H1 (cell line): ENCODE measurements at regions of chr12 and their contacts with region 1.

Region 1: DNA sequence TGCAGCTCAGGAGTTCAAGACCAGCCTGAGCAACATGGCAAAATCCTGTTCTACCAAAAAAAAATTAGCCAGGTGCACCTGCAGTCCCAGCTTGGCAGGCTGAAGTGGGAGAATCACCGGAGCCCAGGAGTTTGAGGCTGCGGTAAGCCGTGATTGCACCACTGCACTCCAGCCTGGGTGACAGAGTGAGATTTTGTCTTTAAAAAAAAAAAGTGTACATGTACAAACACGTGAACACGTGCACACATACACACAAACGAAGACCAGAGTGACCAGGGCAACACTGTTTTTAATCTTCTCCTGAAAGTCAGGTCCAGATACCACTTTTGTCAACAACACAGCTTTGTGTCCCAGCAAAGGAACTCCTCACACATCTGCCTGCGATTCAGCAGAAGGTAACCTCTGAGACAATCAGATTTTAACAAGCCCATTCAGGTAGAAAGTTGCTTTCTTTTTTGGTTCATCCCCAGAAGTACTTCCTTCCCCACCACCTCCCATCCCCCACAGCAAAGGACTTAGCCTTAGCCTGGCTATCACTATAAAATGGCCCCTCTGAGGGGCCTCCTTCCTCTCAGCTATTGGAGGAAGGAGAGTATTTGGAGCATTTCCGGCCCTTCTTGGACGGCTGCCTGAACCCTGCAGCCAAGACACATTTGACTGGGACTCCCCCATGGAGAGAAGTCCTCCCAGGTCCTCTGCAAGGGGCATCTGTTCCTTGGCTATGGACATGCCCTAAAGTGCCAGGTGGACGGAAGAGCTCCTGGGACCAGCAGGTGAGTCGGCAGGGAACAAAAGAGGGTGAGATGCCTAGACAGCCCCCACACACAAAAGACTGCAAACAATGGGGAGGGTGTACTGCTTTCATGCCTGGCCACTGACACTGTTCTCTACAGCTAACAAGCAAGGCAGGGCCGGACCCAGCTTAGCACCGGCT is 9.8 kb downstream of the CTDSP2 start:
- DNase-seq: no peak
- H3K4me3 ChIP-seq: peak overlapping the region in 3 of 4 experiments; percentile 0 to 31 (median 14); a peak in 3 of 8 replicates
- H3K27ac ChIP-seq: peak overlapping the region; percentile 55; the same call in 1 of the 2 replicates
- H3K4me1 ChIP-seq: peaks cover 37 to 69% (median 45%) of the 10 kb centered on the region in 4 experiments
- H3K27me3 ChIP-seq: no peaks in the 10 kb centered on the region
- CTCF ChIP-seq: no peak
- EP300 ChIP-seq: peak in 1 of 2 experiments; percentile 30; a peak in 1 of 3 replicates
- POLR2A ChIP-seq: no peak; a peak in 1 of 3 replicates
- RAD21 ChIP-seq: no peak

Region 2: DNA sequence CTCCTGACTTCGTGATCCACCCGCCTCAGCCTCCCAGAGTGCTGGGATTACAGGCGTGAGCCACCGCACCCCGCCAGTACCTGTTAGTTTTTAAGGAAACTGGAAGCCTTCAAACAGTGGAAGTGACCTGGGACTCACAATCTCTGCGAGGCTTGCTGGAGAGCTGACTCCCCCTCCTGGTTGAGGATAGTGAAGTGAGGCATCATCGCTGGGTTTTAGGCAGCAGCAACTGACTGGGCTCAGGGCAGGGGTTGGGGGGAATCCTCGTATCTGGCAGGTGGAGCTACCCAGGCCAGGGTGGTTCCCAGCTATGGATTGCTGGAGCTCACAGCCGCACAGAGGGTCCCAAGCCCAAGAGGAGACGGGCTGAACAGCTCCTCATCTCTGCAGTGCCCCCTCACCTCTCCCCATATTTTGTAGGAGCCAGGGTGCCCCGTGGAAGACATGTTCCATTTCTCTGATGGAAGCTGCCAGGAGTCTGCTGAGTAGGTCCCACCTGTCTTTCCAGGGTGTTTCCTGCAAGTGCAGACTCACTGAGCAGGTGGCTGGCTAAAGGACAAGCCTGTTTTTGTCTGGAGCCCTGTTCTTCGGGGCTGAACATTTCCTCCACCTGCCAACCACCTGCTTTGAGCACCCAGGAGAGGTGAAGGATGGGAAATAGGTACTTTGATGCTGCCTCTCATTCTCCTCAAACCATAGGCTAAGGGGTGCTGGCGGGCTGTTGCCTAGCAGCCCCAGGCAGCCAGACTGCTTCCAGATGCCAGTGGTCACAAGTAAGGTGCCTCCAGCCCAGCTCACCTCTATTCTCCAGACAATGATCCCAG is 21.3 kb before region 1 on chr12:
- CTCF ChIA-PET with region 1: interaction called, 8 read pairs
- POLR2A ChIA-PET with region 1: interaction called, 12 read pairs
- DNase-seq: peak; percentile 50 to 62
- H3K4me3 ChIP-seq: no peak overlapping the region
- H3K27ac ChIP-seq: no peak overlapping the region
- H3K4me1 ChIP-seq: no peaks in the 10 kb centered on the region
- H3K27me3 ChIP-seq: no peaks in the 10 kb centered on the region
- CTCF ChIP-seq: peak; percentile 63 to 70 (median 67)
- EP300 ChIP-seq: no peak
- POLR2A ChIP-seq: no peak
- RAD21 ChIP-seq: peak; percentile 57 to 70

Region 3: DNA sequence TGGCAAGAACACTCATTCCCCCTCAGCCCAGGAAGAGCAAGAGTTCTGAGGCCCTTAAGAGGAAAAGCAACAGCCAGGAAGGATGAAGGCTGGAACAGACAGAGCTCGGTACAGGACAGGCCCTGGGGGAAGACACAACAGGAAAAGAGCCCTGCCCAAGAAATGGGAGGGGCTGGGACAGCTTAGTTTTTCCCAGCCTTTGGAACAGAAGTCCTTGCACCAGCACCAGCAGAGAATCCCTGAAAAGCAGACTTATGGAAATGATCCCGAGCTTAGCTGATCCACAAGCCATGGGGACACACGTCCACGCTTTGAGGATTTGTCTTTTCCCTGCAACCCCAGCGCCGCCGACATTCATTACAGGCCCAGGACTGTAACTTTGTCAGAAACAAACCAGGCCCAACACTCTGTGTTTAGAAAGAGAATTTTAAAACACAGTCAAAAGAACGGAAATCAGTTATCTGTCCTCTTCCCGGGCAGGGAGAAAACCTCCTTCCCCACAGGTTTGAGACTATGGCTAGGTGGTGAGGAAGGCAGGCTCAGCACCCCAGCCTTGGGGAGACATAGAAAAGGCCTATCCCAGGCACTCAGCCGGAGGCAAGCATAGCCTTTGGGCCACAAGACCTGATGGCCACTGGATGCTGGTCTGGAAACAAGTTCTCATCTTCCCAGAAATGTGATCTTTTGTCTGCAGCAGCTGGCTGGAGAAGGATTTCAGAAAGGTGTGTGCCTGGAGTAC is 14.1 kb before region 1 on chr12:
- CTCF ChIA-PET with region 1: interaction called, 8 read pairs
- POLR2A ChIA-PET with region 1: interaction called, 12 read pairs
- DNase-seq: no peak
- H3K4me3 ChIP-seq: no peak overlapping the region
- H3K27ac ChIP-seq: no peak overlapping the region
- H3K4me1 ChIP-seq: no peaks in the 10 kb centered on the region
- H3K27me3 ChIP-seq: no peaks in the 10 kb centered on the region
- CTCF ChIP-seq: no peak
- EP300 ChIP-seq: no peak
- POLR2A ChIP-seq: no peak
- RAD21 ChIP-seq: no peak

Region 4: GRCh38 chr12:57852620-57853500 is 16.2 kb after region 1 on chr12:
- CTCF ChIA-PET with region 1: interaction called, 44 read pairs
- POLR2A ChIA-PET with region 1: interaction called, 722 read pairs
- DNase-seq: peak; percentile 80 to 85
- H3K4me3 ChIP-seq: peak overlapping the region; percentile 23 to 57 (median 44); a peak in 7 of 8 replicates
- H3K27ac ChIP-seq: peak overlapping the region; percentile 33; the same call in 1 of the 2 replicates
- H3K4me1 ChIP-seq: peaks cover 15 to 28% (median 22%) of the 10 kb centered on the region in 4 experiments
- H3K27me3 ChIP-seq: peaks cover 0 to 3% (median 1%) of the 10 kb centered on the region in 4 experiments; a peak in 2 of 7 replicates
- CTCF ChIP-seq: peak; percentile 17 to 24 (median 23)
- EP300 ChIP-seq: peak in 1 of 2 experiments; percentile 8; a peak in 1 of 3 replicates
- POLR2A ChIP-seq: peak in 1 of 2 experiments; percentile 66; a peak in 2 of 3 replicates
- RAD21 ChIP-seq: peak; percentile 27 to 44

Region 5: DNA sequence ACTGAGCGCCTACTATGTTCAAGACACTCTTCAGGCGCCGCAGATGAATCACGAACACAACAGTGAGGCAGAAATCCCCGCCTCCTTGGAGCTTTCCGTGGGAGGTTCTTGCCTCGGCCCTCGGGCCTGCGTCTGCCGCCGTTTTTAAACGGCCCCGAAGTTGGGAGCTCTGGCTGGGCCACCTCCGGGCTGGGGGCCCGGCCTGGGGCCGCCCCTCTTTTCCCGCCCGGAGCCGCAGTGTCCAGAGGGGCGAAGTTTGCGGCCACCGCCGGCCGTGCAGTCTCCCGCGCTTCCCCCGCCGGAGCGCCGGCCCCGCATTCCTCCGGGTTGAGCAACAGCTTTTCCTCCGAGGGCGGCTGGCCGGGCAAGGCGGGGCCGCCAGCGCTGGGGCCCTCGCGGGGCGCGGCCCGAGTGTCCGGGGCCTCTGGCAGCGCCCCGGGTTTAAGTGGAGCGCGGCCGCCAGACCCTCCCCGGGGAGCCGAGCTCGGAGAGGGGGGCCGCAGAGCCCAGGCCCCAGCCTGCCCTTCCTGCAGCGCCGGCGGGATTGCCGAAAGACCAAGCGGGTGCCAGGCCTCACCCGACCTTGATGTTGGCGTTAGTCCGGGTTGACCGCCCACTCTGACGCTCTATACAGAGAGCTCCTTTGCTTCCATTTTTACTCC is 28.5 kb after region 1 on chr12:
- CTCF ChIA-PET with region 1: interaction called, 40 read pairs
- POLR2A ChIA-PET with region 1: interaction called, 722 read pairs
- DNase-seq: peak in 1 of 2 experiments; percentile 73
- H3K4me3 ChIP-seq: peak overlapping the region; percentile 25 to 65 (median 41)
- H3K27ac ChIP-seq: no peak overlapping the region
- H3K4me1 ChIP-seq: peaks cover 0 to 12% (median 8%) of the 10 kb centered on the region in 4 experiments; a peak in 5 of 7 replicates
- H3K27me3 ChIP-seq: peaks cover 0 to 20% (median 10%) of the 10 kb centered on the region in 4 experiments; a peak in 5 of 7 replicates
- CTCF ChIP-seq: no peak
- EP300 ChIP-seq: no peak
- POLR2A ChIP-seq: peak in 1 of 2 experiments; percentile 55; a peak in 1 of 3 replicates
- RAD21 ChIP-seq: no peak

Region 6: GRCh38 chr12:57874166-57875108 is 37.7 kb after region 1 on chr12:
- CTCF ChIA-PET with region 1: interaction called, 12 read pairs
- POLR2A ChIA-PET with region 1: interaction called, 722 read pairs
- DNase-seq: no peak
- H3K4me3 ChIP-seq: no peak overlapping the region
- H3K27ac ChIP-seq: no peak overlapping the region
- H3K4me1 ChIP-seq: no peaks in the 10 kb centered on the region; a peak in 1 of 7 replicates
- H3K27me3 ChIP-seq: no peaks in the 10 kb centered on the region
- CTCF ChIP-seq: no peak
- EP300 ChIP-seq: no peak
- POLR2A ChIP-seq: no peak
- RAD21 ChIP-seq: no peak

Region 7: GRCh38 chr12:57888409-57889157 is 51.9 kb after region 1 on chr12:
- CTCF ChIA-PET with region 1: interaction called, 119 read pairs
- POLR2A ChIA-PET with region 1: interaction called, 181 read pairs
- DNase-seq: no peak
- H3K4me3 ChIP-seq: peak overlapping the region in 3 of 4 experiments; percentile 4 to 23 (median 19); a peak in 3 of 8 replicates
- H3K27ac ChIP-seq: peak overlapping the region; percentile 4; the same call in 1 of the 2 replicates
- H3K4me1 ChIP-seq: peaks cover 2 to 22% (median 17%) of the 10 kb centered on the region in 4 experiments
- H3K27me3 ChIP-seq: no peaks in the 10 kb centered on the region; a peak in 1 of 7 replicates
- CTCF ChIP-seq: no peak
- EP300 ChIP-seq: no peak
- POLR2A ChIP-seq: peak in 1 of 2 experiments; percentile 59; a peak in 2 of 3 replicates
- RAD21 ChIP-seq: no peak